PC-3 (cell line): ENCODE measurements at regions of chr3 and their contacts with region 1.

Region 1: DNA sequence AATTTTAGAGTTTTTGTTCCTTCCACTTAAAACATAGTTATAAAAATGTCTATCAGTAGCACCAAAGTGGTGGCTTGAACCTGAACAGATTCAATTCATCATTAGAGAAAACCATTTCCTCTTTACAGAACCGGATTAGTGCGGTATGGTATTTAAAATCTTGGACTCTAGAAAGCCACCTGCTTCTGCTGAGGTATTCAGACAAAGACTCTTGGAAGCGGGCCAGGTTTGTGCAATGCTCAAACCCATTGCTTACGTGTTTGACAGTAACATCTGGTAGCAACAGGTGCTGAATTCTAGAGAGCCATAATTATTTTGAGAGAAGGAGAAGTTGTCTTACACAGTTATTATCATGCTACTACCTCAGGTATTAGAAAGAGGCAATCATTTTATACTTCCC is 290.5 kb downstream of the NAALADL2 start:
- DNase-seq: peak; percentile 76
- ATAC-seq: no peak
- H3K4me3 ChIP-seq: no peak overlapping the region
- H3K27ac ChIP-seq: peak overlapping the region; percentile 84
- H3K4me1 ChIP-seq: peaks cover 26% of the 10 kb centered on the region
- H3K27me3 ChIP-seq: no peaks in the 10 kb centered on the region
- CTCF ChIP-seq: no peak

Region 2: DNA sequence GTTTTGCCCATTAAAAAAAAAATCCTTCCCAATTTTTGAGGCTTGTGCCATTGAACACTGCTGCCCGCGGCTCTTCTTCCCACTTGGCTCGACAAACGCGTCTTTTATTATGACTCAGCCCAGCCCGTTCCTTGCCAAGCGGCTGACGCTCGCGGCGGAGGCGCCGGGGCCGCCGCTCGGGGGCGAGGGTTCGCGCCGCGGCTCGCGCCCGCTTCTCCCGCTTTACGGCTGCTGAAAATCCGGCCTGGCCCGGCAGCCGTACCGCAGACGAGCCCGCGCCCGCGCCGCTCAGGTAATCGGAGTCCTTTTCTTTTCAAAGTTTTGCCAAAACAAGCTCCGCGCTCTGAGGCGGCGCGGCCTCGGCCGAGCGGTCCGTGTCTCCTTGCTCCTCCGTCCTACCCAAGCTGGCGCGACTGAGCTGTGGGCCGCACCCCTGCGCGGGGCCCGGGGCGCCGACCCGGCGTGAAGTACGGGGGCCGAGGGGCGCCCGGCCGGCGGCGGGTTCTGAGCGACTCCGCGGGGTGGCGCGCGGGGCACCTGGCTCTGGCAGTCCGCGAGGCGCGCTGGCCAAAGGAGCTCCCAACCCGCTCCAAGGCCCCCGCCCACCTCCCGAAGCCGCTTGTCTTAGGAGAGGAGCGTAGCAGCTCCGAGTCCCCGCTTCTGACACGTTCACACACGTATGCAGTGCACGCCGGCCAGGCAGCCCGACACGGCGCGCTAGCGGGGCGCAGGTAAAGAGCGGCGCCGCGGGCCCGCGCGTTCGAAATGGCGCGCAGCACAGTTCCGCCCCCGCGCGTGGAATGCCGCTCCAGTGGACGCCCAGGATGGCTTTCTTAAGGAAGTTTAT is 708.7 kb before region 1 on chr3:
- CTCF ChIA-PET with region 1: no interaction called
- POLR2A ChIA-PET with region 1: no interaction called
- intact Hi-C with region 1: loop called (anchors 1 kb)
- DNase-seq: peak; percentile 95
- ATAC-seq: peak; percentile 66
- H3K4me3 ChIP-seq: peak overlapping the region; percentile 77
- H3K27ac ChIP-seq: peak overlapping the region; percentile 95
- H3K4me1 ChIP-seq: peaks cover 34% of the 10 kb centered on the region
- H3K27me3 ChIP-seq: no peaks in the 10 kb centered on the region
- CTCF ChIP-seq: no peak; the same call in 1 of the 2 replicates

Region 3: DNA sequence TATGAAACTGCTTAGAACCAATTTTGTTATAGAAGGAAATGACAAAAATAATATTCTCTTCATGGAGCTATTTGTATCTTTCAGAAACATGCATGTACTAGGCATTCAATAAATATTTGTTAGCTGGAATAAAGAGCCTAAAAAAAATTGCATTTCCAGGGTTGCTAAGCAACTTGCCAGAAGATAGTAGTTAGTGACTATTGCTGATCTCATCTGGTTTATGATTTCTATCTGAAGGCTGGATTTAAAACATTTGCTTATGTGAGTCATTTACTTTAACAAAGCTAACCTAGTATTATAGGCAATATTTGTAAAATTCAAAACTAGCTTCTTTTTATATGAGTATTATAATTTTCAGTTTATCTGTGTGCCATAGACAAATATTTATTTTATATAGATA is 212.2 kb before region 1 on chr3:
- CTCF ChIA-PET with region 1: no interaction called
- POLR2A ChIA-PET with region 1: no interaction called
- intact Hi-C with region 1: loop called (anchors 1 kb)
- DNase-seq: peak; percentile 85
- ATAC-seq: peak; percentile 82
- H3K4me3 ChIP-seq: no peak overlapping the region; the same call in 1 of the 2 replicates
- H3K27ac ChIP-seq: peak overlapping the region; percentile 63
- H3K4me1 ChIP-seq: peaks cover 25% of the 10 kb centered on the region
- H3K27me3 ChIP-seq: no peaks in the 10 kb centered on the region
- CTCF ChIP-seq: no peak

Region 4: DNA sequence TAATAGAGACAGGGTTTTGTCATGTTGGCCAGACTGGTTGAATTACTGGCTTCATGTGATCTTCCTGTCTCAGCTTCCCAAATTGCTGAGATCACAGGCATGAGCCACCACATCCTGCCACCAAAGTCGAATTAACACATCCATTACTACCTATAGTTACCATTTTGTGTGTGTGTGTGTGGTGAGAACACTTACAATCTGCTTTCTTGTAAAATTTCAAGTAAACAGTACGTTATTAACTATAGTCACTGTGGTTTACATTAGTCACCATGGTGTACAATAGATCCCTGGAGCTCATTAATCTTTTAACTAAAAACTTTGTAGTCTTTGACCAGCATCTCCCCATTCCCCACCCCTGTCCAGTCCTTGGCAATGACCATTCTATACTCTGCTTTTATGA is 20.5 kb before region 1 on chr3:
- CTCF ChIA-PET with region 1: no interaction called
- POLR2A ChIA-PET with region 1: no interaction called
- intact Hi-C with region 1: loop called (anchors 1 kb)
- DNase-seq: peak; percentile 84
- ATAC-seq: peak; percentile 94
- H3K4me3 ChIP-seq: no peak overlapping the region
- H3K27ac ChIP-seq: peak overlapping the region; percentile 82
- H3K4me1 ChIP-seq: peaks cover 16% of the 10 kb centered on the region
- H3K27me3 ChIP-seq: no peaks in the 10 kb centered on the region
- CTCF ChIP-seq: no peak

Region 5: GRCh38 chr3:175178816-175179454 is 29.3 kb after region 1 on chr3:
- CTCF ChIA-PET with region 1: no interaction called
- POLR2A ChIA-PET with region 1: no interaction called
- intact Hi-C with region 1: no loop called
- DNase-seq: peak; percentile 85
- ATAC-seq: peak; percentile 93
- H3K4me3 ChIP-seq: no peak overlapping the region
- H3K27ac ChIP-seq: peak overlapping the region; percentile 51
- H3K4me1 ChIP-seq: peaks cover 18% of the 10 kb centered on the region
- H3K27me3 ChIP-seq: no peaks in the 10 kb centered on the region
- CTCF ChIP-seq: no peak

Region 6: GRCh38 chr3:175310046-175310445 is 160.4 kb after region 1 on chr3:
- CTCF ChIA-PET with region 1: no interaction called
- POLR2A ChIA-PET with region 1: no interaction called
- intact Hi-C with region 1: loop called (anchors 1 kb)
- DNase-seq: peak; percentile 70
- ATAC-seq: peak; percentile 69
- H3K4me3 ChIP-seq: no peak overlapping the region
- H3K27ac ChIP-seq: peak overlapping the region; percentile 44
- H3K4me1 ChIP-seq: peaks cover 23% of the 10 kb centered on the region
- H3K27me3 ChIP-seq: no peaks in the 10 kb centered on the region
- CTCF ChIP-seq: no peak

Region 7: GRCh38 chr3:175606650-175607318 is 457.1 kb after region 1 on chr3:
- CTCF ChIA-PET with region 1: no interaction called
- POLR2A ChIA-PET with region 1: no interaction called
- intact Hi-C with region 1: loop called (anchors 10 kb)
- DNase-seq: peak; percentile 60
- ATAC-seq: peak; percentile 74
- H3K4me3 ChIP-seq: no peak overlapping the region
- H3K27ac ChIP-seq: no peak overlapping the region
- H3K4me1 ChIP-seq: peaks cover 11% of the 10 kb centered on the region
- H3K27me3 ChIP-seq: no peaks in the 10 kb centered on the region
- CTCF ChIP-seq: no peak